CD8-positive, alpha-beta T cell (primary cell): ENCODE measurements at regions of chr7 and their contacts with region 1.

Region 1: DNA sequence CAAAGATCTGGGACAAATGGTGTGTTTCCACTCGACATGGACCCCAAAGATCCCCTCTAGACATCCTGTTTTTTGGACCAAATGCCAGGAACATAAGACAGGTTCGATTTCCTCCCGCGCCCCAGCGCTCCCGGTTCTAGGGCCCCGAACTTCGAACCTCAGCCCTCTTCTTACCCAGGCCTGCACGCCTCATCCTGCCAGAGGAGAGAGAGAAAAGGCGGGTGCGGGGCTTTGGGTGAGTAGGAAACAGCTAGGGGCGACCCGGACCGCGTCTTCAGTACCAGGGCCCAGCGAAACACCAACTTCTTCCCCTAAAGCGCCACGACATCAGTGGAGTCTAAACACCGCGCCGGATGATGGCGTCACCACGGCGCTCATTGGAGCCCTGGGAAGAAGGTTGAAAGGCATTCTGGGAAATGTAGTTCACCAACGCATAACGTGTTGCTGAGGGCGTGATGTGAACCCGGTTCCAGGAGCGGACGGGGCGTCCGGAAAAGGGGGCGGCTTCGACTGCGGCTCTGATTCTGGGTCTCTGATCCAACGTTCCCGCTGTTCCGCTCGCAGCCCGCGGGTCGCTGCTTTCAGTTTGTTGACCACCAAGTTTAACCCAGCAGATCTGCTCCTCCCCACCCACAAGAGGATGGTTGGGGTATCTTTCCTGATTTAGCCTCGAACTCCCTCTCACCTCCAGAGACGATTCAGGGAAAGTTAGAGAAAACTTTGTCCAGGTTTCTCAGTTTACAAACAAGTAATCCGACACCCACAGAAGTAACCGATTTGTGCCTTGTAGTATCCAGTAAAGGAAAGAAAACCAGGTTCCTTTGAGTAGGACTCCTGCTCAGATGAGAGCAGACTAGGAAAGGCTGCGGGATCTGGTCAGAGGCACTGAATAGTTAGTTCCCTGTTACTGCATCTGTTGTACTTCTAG is at the start of gene BET1:
- DNase-seq: peak; percentile 84 to 98 (median 93)
- ATAC-seq: peak; percentile 93
- H3K4me3 ChIP-seq: peak within 1 kb of the TSS; percentile 84 to 91
- H3K4me3 Mint-ChIP-seq: peak within 1 kb of the TSS; percentile 99
- H3K27ac ChIP-seq: peak within 1 kb of the TSS; percentile 90
- H3K27ac Mint-ChIP-seq: peak within 1 kb of the TSS; percentile 99
- H3K4me1 ChIP-seq: peaks cover 11% of the 10 kb centered on the region
- H3K4me1 Mint-ChIP-seq: peaks cover 40% of the 10 kb centered on the region
- H3K27me3 ChIP-seq: no peaks in the 10 kb centered on the region
- H3K27me3 Mint-ChIP-seq: peaks cover 4% of the 10 kb centered on the region
- CTCF ChIP-seq: no peak
- total RNA-seq, gene BET1: 6.2 TPM

Region 2: DNA sequence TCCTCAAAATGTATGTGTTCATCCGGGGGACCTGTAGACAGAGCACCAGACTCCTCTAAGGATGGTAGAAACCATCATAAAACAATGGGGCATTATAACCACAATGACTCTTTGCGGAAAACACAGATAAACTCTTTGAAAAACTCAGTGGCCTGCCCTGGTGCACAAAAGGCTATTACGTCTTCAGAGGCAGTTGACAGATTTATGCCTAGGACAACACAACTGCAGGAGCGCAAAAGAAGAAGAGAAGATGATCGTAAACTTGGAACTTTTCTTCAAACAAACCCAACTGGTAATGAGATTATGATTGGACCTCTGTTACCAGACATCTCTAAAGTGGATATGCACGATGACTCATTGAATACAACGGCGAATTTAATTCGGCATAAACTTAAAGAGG is 1469.7 kb before region 1 on chr7:
- CTCF ChIA-PET with region 1: no interaction called
- POLR2A ChIA-PET with region 1: no interaction called
- intact Hi-C with region 1: loop called in 1 of 2 experiments (anchors 10 kb)
- DNase-seq: no peak
- ATAC-seq: no peak
- H3K4me3 ChIP-seq: no peak overlapping the region
- H3K4me3 Mint-ChIP-seq: no peak overlapping the region
- H3K27ac ChIP-seq: no peak overlapping the region
- H3K27ac Mint-ChIP-seq: no peak overlapping the region
- H3K4me1 ChIP-seq: peaks cover 11% of the 10 kb centered on the region
- H3K4me1 Mint-ChIP-seq: peaks cover 38% of the 10 kb centered on the region
- H3K27me3 ChIP-seq: no peaks in the 10 kb centered on the region
- H3K27me3 Mint-ChIP-seq: no peaks in the 10 kb centered on the region
- CTCF ChIP-seq: no peak

Region 3: GRCh38 chr7:93117852-93118530 is 886.3 kb before region 1 on chr7 and contains the start of gene SAMD9:
- CTCF ChIA-PET with region 1: no interaction called
- POLR2A ChIA-PET with region 1: no interaction called
- intact Hi-C with region 1: loop called (anchors 5 to 10 kb)
- DNase-seq: peak; percentile 18 to 91 (median 60)
- ATAC-seq: peak; percentile 99
- H3K4me3 ChIP-seq: peak within 1 kb of the TSS; percentile 61 to 64
- H3K4me3 Mint-ChIP-seq: peak within 1 kb of the TSS; percentile 80
- H3K27ac ChIP-seq: peak within 1 kb of the TSS; percentile 58 to 81
- H3K27ac Mint-ChIP-seq: peak within 1 kb of the TSS; percentile 84
- H3K4me1 ChIP-seq: peaks cover 28% of the 10 kb centered on the region
- H3K4me1 Mint-ChIP-seq: peaks cover 47% of the 10 kb centered on the region
- H3K27me3 ChIP-seq: no peaks in the 10 kb centered on the region
- H3K27me3 Mint-ChIP-seq: no peaks in the 10 kb centered on the region
- CTCF ChIP-seq: no peak
- total RNA-seq, gene SAMD9: 23.5 to 23.8 TPM

Region 4: DNA sequence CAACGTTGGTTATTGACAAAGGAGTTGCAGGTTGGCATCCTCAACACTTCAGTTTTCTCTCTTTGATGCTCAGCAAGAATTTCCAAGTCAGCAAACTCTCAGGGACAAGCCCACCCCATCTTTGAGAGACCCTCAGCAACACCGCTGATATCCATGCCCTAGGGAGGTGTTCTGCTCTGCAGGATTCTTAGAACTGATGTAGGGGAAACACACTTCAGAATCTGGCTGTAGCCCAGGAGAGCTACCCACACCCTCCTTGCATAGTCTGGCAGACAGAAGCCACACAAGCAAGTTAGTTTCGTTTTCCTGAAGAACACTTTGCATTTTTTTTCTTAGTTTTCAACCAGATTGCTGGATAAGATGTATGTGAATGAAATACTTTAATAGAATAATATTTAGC is 856.9 kb before region 1 on chr7:
- CTCF ChIA-PET with region 1: no interaction called
- POLR2A ChIA-PET with region 1: no interaction called
- intact Hi-C with region 1: loop called in 1 of 2 experiments (anchors 5 kb)
- DNase-seq: peak in 8 of 9 experiments; percentile 4 to 72 (median 44)
- ATAC-seq: peak; percentile 82
- H3K4me3 ChIP-seq: peak overlapping the region; percentile 61 to 68
- H3K4me3 Mint-ChIP-seq: peak overlapping the region; percentile 94
- H3K27ac ChIP-seq: peak overlapping the region; percentile 44 to 79
- H3K27ac Mint-ChIP-seq: peak overlapping the region; percentile 90
- H3K4me1 ChIP-seq: peaks cover 23% of the 10 kb centered on the region
- H3K4me1 Mint-ChIP-seq: peaks cover 33% of the 10 kb centered on the region
- H3K27me3 ChIP-seq: no peaks in the 10 kb centered on the region
- H3K27me3 Mint-ChIP-seq: no peaks in the 10 kb centered on the region
- CTCF ChIP-seq: no peak

Region 5: DNA sequence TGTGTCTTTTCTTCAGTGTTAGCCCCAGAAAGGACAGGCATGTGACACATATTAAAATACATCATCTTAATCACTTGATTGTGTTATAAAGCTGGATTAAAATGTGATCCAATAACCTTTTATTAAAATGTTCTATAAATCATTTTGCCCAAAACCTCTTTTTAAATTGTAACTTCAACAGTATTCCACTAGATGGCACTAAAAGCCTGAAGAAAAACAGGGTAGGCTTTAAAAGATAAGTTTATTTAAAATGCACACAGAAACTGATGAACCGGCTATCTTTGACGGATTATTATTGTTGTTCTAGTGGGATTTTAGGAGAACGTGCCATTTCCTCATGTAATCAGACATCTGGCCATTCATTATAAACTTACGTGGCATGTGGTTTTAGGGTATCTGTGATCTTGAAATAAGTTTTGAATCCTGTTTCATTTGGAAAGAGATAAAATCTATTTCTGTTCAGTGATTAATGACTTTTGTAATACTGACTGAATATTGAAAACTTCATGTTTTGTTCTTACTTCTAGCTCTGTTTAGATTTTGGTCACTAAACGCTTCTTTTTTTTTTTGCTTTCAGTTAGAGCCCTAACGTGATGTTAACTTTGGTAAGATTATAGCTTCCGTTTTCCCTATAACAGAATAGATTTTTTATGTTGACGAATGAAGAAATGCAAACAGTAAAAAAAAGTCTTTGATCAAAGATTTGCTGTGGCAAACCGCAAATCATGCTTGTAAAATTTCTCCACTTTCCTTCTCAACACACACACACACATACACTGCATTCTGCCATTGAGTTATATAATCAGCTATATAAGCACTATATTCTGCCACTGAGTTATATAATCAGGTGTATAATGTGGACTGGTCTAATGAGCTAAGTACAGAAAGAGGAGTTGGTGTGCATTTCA is 758.5 kb before region 1 on chr7:
- CTCF ChIA-PET with region 1: no interaction called
- POLR2A ChIA-PET with region 1: no interaction called
- intact Hi-C with region 1: loop called in 1 of 2 experiments (anchors 5 kb)
- DNase-seq: peak in 2 of 9 experiments; percentile 42 to 56
- ATAC-seq: peak; percentile 72
- H3K4me3 ChIP-seq: peak overlapping the region in 1 of 2 experiments; percentile 6
- H3K4me3 Mint-ChIP-seq: peak overlapping the region; percentile 72
- H3K27ac ChIP-seq: no peak overlapping the region
- H3K27ac Mint-ChIP-seq: no peak overlapping the region
- H3K4me1 ChIP-seq: no peaks in the 10 kb centered on the region
- H3K4me1 Mint-ChIP-seq: peaks cover 14% of the 10 kb centered on the region
- H3K27me3 ChIP-seq: no peaks in the 10 kb centered on the region
- H3K27me3 Mint-ChIP-seq: no peaks in the 10 kb centered on the region
- CTCF ChIP-seq: peak; percentile 84

Region 6: GRCh38 chr7:93921607-93922566 is 82.4 kb before region 1 on chr7 and contains the start of gene GNG11:
- CTCF ChIA-PET with region 1: no interaction called
- POLR2A ChIA-PET with region 1: no interaction called
- intact Hi-C with region 1: no loop called
- DNase-seq: peak in 5 of 9 experiments; percentile 6 to 49 (median 17)
- ATAC-seq: no peak
- H3K4me3 ChIP-seq: peak within 1 kb of the TSS; percentile 4 to 30
- H3K4me3 Mint-ChIP-seq: peak within 1 kb of the TSS; percentile 71
- H3K27ac ChIP-seq: no peak within 1 kb of the TSS
- H3K27ac Mint-ChIP-seq: no peak within 1 kb of the TSS
- H3K4me1 ChIP-seq: peaks cover 5% of the 10 kb centered on the region
- H3K4me1 Mint-ChIP-seq: peaks cover 2% of the 10 kb centered on the region
- H3K27me3 ChIP-seq: peaks cover 4 to 10% of the 10 kb centered on the region in 2 experiments
- H3K27me3 Mint-ChIP-seq: peaks cover 36% of the 10 kb centered on the region
- CTCF ChIP-seq: no peak
- total RNA-seq, gene GNG11: not detected

Region 7: GRCh38 chr7:94666879-94667587 is 662.7 kb after region 1 on chr7:
- CTCF ChIA-PET with region 1: no interaction called
- POLR2A ChIA-PET with region 1: no interaction called
- intact Hi-C with region 1: loop called in 1 of 2 experiments (anchors 5 kb)
- DNase-seq: no peak
- ATAC-seq: no peak
- H3K4me3 ChIP-seq: no peak overlapping the region
- H3K4me3 Mint-ChIP-seq: no peak overlapping the region
- H3K27ac ChIP-seq: no peak overlapping the region
- H3K27ac Mint-ChIP-seq: no peak overlapping the region
- H3K4me1 ChIP-seq: no peaks in the 10 kb centered on the region
- H3K4me1 Mint-ChIP-seq: no peaks in the 10 kb centered on the region
- H3K27me3 ChIP-seq: no peaks in the 10 kb centered on the region
- H3K27me3 Mint-ChIP-seq: peaks cover 28% of the 10 kb centered on the region
- CTCF ChIP-seq: no peak